ENCODE measurements at regions of chr17 and their contacts with region 1.

Region 1: GRCh38 chr17:70813355-70813930 is 644.1 kb downstream of the KCNJ2 start:
- DNase-seq: no peak
- ATAC-seq: no peak
- H3K4me3 ChIP-seq: no peak overlapping the region
- H3K4me3 Mint-ChIP-seq: no peak overlapping the region
- H3K27ac ChIP-seq: no peak overlapping the region
- H3K27ac Mint-ChIP-seq: no peak overlapping the region
- H3K4me1 ChIP-seq: no peaks in the 10 kb centered on the region
- H3K4me1 Mint-ChIP-seq: no peaks in the 10 kb centered on the region
- H3K27me3 ChIP-seq: no peaks in the 10 kb centered on the region
- H3K27me3 Mint-ChIP-seq: no peaks in the 10 kb centered on the region
- CTCF ChIP-seq: no peak

Region 2: DNA sequence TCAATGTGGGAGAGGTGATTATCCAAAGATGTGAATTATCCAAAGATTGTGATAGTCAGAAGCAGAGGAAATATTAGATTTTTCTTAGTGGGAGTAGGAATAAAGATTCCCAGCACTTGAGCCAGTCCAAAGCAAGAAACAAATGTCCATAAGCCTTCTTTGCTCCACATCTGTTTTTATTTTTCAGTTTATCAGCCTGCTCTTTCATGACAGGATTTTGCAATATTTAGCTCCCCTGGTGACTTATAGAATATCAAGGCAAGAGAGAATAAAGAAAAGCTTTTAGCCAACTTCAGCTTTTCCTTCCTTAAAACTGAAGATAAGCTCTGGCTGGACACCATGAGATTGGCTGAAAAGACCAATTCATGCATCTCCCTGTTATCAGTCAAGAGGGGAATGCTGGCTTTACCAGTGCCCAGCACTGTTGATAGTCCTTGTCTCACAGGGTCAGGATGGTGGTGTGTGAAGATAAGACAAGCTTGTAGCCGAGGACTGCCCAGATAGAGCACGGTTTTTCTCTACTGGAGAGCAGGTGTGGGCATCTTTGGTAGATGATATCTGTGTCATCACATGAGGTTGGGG is 62.4 kb after region 1 on chr17:
- CTCF ChIA-PET with region 1: no interaction called
- POLR2A ChIA-PET with region 1: no interaction called
- intact Hi-C with region 1: loop called in 1 of 2 experiments (anchors 10 kb)
- DNase-seq: no peak
- ATAC-seq: no peak
- H3K4me3 ChIP-seq: no peak overlapping the region
- H3K4me3 Mint-ChIP-seq: no peak overlapping the region
- H3K27ac ChIP-seq: no peak overlapping the region
- H3K27ac Mint-ChIP-seq: no peak overlapping the region
- H3K4me1 ChIP-seq: no peaks in the 10 kb centered on the region
- H3K4me1 Mint-ChIP-seq: no peaks in the 10 kb centered on the region
- H3K27me3 ChIP-seq: no peaks in the 10 kb centered on the region
- H3K27me3 Mint-ChIP-seq: no peaks in the 10 kb centered on the region
- CTCF ChIP-seq: no peak

Measured in CD4-positive, alpha-beta T cell (primary cell).